ENCODE measurements at regions of chr7 and their contacts with region 1.

Region 1: GRCh38 chr7:143345428-143345900 is 17.0 kb downstream of the FAM131B start:
- DNase-seq: peak; percentile 78
- H3K4me3 Mint-ChIP-seq: peak overlapping the region; percentile 72
- H3K27ac Mint-ChIP-seq: no peak overlapping the region
- H3K4me1 Mint-ChIP-seq: peaks cover 8% of the 10 kb centered on the region
- H3K27me3 Mint-ChIP-seq: peaks cover 2% of the 10 kb centered on the region

Region 2: DNA sequence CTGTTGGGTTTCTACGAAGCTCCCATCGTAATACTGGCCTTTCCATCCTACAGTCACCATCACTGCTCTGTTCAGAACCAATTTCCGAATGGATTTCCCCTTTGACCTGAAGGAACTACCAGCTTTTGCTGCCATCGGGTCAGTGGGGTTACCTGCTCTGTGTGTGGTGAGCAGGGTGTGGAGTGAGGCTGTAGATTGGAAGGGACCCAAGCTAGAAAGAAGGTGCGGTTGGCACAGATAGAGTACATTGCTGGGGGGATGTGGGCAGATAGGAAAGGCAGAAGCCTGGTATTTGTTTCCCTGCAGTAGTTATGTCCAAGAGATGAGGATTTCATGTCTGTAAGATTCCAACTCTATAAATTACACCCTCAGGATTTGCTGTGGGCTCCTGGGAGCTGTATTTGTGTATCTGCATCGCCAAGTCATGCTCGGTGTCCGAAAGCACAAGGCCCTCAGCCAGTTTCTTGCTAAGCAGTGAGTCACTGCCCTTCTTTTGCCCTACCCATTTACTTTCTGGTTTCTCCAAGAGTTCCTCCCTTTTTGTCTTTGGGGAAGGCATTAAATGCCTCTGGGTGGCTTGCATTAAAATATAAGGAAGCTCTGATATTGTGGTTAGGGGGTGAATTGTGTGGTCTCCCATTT is 14.2 kb before region 1 on chr7:
- CTCF ChIA-PET with region 1: interaction called, 12 read pairs
- intact Hi-C with region 1: loop called (anchors 2 kb)
- DNase-seq: no peak
- H3K4me3 Mint-ChIP-seq: no peak overlapping the region
- H3K27ac Mint-ChIP-seq: no peak overlapping the region
- H3K4me1 Mint-ChIP-seq: no peaks in the 10 kb centered on the region
- H3K27me3 Mint-ChIP-seq: peaks cover 3% of the 10 kb centered on the region

Region 3: DNA sequence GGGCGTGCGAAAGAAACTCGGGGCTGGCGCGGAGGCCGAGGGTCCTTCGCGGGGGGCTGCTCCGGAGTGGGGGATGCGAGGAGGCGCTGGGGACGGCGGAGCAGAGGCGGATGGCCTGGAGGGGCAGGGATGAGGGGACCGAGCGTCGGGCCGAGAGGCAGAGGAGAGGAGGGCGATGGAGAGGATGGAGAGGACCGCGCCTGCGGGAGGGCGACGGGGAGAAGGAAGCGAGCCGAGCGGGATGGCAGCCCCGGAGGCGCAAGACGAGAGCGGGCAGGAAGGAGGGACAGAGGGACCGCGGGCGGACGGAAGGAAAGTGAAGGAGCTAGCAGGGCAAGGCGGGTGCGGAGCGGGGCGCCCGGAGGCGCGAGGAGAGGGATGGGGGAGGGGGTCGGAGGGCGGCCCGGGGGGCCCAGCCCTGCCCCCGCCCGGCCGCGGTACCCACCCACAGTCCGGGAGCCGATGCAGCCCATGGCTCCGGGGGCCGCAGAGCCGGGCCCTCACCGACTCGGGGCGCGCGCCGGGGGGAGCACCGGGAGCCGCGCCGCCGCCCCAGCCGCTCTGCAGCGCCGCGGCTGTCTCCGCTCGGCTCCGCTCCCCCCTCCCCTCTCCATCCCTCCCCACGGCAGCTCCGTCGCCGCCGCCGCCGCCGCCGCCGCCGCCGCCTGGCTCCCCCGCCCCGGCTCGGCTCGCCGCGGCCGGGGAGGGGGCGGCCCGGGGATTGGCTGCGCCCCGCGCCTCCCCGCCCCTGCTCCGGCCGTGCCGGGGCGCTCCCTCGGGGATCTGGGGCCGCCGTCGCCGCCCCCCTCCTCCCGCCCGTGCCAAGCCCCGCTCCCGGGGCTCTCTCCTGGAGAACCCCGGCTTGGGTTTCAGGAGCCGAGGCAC is 16.9 kb after region 1 on chr7 and contains the start of gene FAM131B:
- CTCF ChIA-PET with region 1: interaction called, 3 read pairs
- intact Hi-C with region 1: loop called (anchors 2 kb)
- DNase-seq: peak; percentile 52
- H3K4me3 Mint-ChIP-seq: peak within 1 kb of the TSS; percentile 85
- H3K27ac Mint-ChIP-seq: no peak within 1 kb of the TSS
- H3K4me1 Mint-ChIP-seq: peaks cover 4% of the 10 kb centered on the region
- H3K27me3 Mint-ChIP-seq: peaks cover 21% of the 10 kb centered on the region
- total RNA-seq, gene FAM131B: 1.5 to 1.7 TPM

Region 4: GRCh38 chr7:143416565-143417149 is 71.2 kb after region 1 on chr7:
- CTCF ChIA-PET with region 1: interaction called, 13 read pairs
- intact Hi-C with region 1: loop called (anchors 1 kb)
- DNase-seq: no peak
- H3K4me3 Mint-ChIP-seq: no peak overlapping the region
- H3K27ac Mint-ChIP-seq: no peak overlapping the region
- H3K4me1 Mint-ChIP-seq: peaks cover 22% of the 10 kb centered on the region
- H3K27me3 Mint-ChIP-seq: no peaks in the 10 kb centered on the region

Measured in activated naive CD4-positive, alpha-beta T cell treated with anti-CD3 and anti-CD28 coated beads for 36 hours (primary cell).